SK-N-SH (cell line): ENCODE measurements at regions of chr3 and their contacts with region 1.

Region 1: GRCh38 chr3:157572559-157573270 is 69.5 kb upstream of the VEPH1 start:
- DNase-seq: peak; percentile 55
- H3K4me3 ChIP-seq: no peak overlapping the region; a peak in 1 of 4 replicates
- H3K27ac ChIP-seq: no peak overlapping the region
- H3K4me1 ChIP-seq: no peaks in the 10 kb centered on the region; a peak in 1 of 4 replicates
- H3K27me3 ChIP-seq: no peaks in the 10 kb centered on the region
- CTCF ChIP-seq: peak; percentile 80
- EP300 ChIP-seq: no peak
- RAD21 ChIP-seq: peak; percentile 70

Region 2: DNA sequence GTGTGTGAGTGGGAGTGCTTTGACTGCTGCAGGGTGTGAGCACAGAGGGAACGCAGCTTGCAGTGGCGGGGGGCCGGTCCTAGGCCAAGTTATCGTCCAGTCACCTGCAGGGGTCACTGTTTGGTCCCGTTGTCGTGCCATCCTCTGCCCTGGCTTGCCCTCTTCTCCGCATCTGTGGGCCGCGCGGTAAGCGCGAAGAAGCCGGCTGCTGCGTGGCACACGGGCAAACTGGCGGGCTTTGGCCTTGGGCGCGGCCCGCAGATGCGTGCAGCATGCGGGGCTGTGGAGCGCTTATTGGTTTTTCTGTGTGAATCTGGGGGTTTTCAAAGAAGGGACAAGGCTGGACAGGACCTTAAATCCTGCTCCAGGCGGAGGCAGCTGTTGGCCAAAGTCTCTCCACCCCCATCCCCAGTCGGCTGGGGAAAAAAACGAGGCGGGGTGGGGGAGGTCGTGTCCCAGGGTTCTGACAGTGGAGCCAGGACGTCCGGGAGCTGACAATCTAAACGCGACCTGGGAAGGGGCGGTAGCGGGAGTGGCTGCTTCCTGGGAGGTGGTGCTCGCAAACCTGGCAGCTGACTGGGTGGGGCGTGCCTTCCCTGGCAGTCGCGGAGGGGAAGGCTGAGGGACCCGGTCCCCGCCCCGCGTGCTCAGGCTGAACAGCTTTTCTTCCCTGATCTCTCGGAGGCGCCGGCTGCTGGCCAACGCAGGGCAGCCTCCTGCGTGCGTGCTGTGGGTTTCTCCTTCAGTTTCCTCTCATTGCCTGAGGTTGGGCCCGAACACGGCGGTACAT is 29.8 kb before region 1 on chr3:
- CTCF ChIA-PET with region 1: interaction called, 30 read pairs
- POLR2A ChIA-PET with region 1: no interaction called
- DNase-seq: peak; percentile 89
- H3K4me3 ChIP-seq: peak overlapping the region; percentile 48 to 57
- H3K27ac ChIP-seq: peak overlapping the region in 1 of 2 experiments; percentile 51; a peak in 1 of 4 replicates
- H3K4me1 ChIP-seq: no peaks in the 10 kb centered on the region; a peak in 1 of 4 replicates
- H3K27me3 ChIP-seq: no peaks in the 10 kb centered on the region
- CTCF ChIP-seq: peak; percentile 42
- EP300 ChIP-seq: no peak
- RAD21 ChIP-seq: 0 out of 2 replicates have a peak, but pooled peaks have one; percentile 7

Region 3: DNA sequence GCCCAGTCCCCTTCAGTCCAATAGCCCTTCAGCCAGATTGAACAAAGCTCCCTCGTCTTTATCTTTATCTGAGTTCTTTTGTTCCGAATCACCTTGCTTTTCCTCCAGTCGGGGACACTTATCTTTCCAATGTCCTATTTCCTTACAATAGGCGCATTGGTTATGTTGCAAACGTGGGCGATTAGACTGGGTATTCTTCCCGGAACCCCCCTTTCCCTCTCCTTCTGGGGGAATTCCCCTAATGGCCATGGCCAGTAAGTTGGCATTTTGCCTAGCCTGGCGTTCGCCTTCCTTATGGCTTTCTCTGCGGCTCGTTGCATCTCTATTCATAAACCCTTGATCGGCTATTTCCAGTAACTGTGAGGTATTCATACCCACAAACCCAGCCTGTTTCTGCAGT is 12.7 kb after region 1 on chr3:
- CTCF ChIA-PET with region 1: interaction called, 18 read pairs
- POLR2A ChIA-PET with region 1: no interaction called
- DNase-seq: no peak
- H3K4me3 ChIP-seq: no peak overlapping the region
- H3K27ac ChIP-seq: no peak overlapping the region
- H3K4me1 ChIP-seq: peaks cover 0 to 4% of the 10 kb centered on the region in 2 experiments; a peak in 2 of 4 replicates
- H3K27me3 ChIP-seq: no peaks in the 10 kb centered on the region
- CTCF ChIP-seq: no peak
- EP300 ChIP-seq: no peak
- RAD21 ChIP-seq: no peak

Region 4: DNA sequence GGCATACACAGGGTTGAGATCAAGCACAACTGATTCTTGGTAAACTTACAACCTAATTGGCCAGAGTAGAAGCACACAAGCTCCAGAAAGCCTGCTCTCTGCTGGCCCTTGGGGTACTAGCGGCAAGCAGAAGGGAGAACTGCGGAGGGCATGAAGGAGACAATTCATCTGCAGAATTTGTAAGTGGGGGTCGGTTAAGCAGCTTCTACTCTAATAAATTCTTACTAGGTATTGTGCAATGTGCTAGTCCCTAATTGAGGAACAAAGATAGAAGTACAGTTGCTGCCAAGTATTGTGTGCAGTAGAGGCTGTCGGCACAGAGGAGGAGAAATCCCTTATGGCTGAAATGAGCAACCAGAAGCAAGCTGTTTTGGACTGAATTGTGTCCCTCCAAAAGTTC is 21.7 kb after region 1 on chr3:
- CTCF ChIA-PET with region 1: interaction called, 10 read pairs
- POLR2A ChIA-PET with region 1: no interaction called
- DNase-seq: no peak
- H3K4me3 ChIP-seq: no peak overlapping the region
- H3K27ac ChIP-seq: no peak overlapping the region
- H3K4me1 ChIP-seq: peaks cover 0 to 4% of the 10 kb centered on the region in 2 experiments; a peak in 1 of 4 replicates
- H3K27me3 ChIP-seq: no peaks in the 10 kb centered on the region
- CTCF ChIP-seq: no peak
- EP300 ChIP-seq: no peak
- RAD21 ChIP-seq: no peak

Region 5: GRCh38 chr3:158026236-158026635 is 453.5 kb after region 1 on chr3:
- CTCF ChIA-PET with region 1: no interaction called
- POLR2A ChIA-PET with region 1: no interaction called
- DNase-seq: no peak
- H3K4me3 ChIP-seq: no peak overlapping the region
- H3K27ac ChIP-seq: no peak overlapping the region
- H3K4me1 ChIP-seq: no peaks in the 10 kb centered on the region
- H3K27me3 ChIP-seq: no peaks in the 10 kb centered on the region
- CTCF ChIP-seq: no peak
- EP300 ChIP-seq: no peak
- RAD21 ChIP-seq: no peak